ENCODE measurements at regions of chr17 and their contacts with region 1.

Region 1: GRCh38 chr17:40854159-40854814 is 12.7 kb downstream of the KRT12 start:
- DNase-seq: no peak
- H3K4me3 Mint-ChIP-seq: no peak overlapping the region
- H3K27ac Mint-ChIP-seq: no peak overlapping the region
- H3K4me1 Mint-ChIP-seq: no peaks in the 10 kb centered on the region
- H3K27me3 Mint-ChIP-seq: peaks cover 27% of the 10 kb centered on the region

Region 2: GRCh38 chr17:41322094-41322902 is 468.0 kb after region 1 on chr17:
- intact Hi-C with region 1: loop called (anchors 5 kb)
- DNase-seq: no peak
- H3K4me3 Mint-ChIP-seq: no peak overlapping the region
- H3K27ac Mint-ChIP-seq: no peak overlapping the region
- H3K4me1 Mint-ChIP-seq: peaks cover 2% of the 10 kb centered on the region
- H3K27me3 Mint-ChIP-seq: peaks cover 2% of the 10 kb centered on the region